Activated CD4-positive, alpha-beta T cell treated with anti-CD3 and anti-CD28 coated beads for 36 hours (primary cell): ENCODE measurements at regions of chr11 and their contacts with region 1.

Region 1: GRCh38 chr11:63768237-63769043 is at the start of gene ZFTA:
- DNase-seq: peak; percentile 77
- ATAC-seq: peak; percentile 58
- H3K4me3 Mint-ChIP-seq: peak within 1 kb of the TSS; percentile 96
- H3K27ac Mint-ChIP-seq: peak within 1 kb of the TSS; percentile 78
- H3K4me1 Mint-ChIP-seq: peaks cover 6% of the 10 kb centered on the region
- H3K27me3 Mint-ChIP-seq: peaks cover 20% of the 10 kb centered on the region
- total RNA-seq, gene ZFTA: 1.5 to 1.7 TPM

Region 2: GRCh38 chr11:63813035-63813562 is 44.7 kb after region 1 on chr11 and contains the start of gene SPINDOC:
- CTCF ChIA-PET with region 1: no interaction called
- POLR2A ChIA-PET with region 1: no interaction called
- intact Hi-C with region 1: loop called (anchors 1 to 5 kb)
- DNase-seq: peak; percentile 80
- ATAC-seq: peak; percentile 91
- H3K4me3 Mint-ChIP-seq: peak within 1 kb of the TSS; percentile 77
- H3K27ac Mint-ChIP-seq: no peak within 1 kb of the TSS
- H3K4me1 Mint-ChIP-seq: peaks cover 21% of the 10 kb centered on the region
- H3K27me3 Mint-ChIP-seq: no peaks in the 10 kb centered on the region
- total RNA-seq, gene SPINDOC: 25.7 to 26.2 TPM

Region 3: GRCh38 chr11:63945477-63946163 is 177.2 kb after region 1 on chr11:
- CTCF ChIA-PET with region 1: interaction called, 6 read pairs
- POLR2A ChIA-PET with region 1: no interaction called
- intact Hi-C with region 1: loop called in 1 of 2 experiments (anchors 5 kb)
- DNase-seq: peak; percentile 69
- ATAC-seq: peak; percentile 80
- H3K4me3 Mint-ChIP-seq: no peak overlapping the region
- H3K27ac Mint-ChIP-seq: no peak overlapping the region
- H3K4me1 Mint-ChIP-seq: peaks cover under 1% of the 10 kb centered on the region
- H3K27me3 Mint-ChIP-seq: no peaks in the 10 kb centered on the region

Region 4: DNA sequence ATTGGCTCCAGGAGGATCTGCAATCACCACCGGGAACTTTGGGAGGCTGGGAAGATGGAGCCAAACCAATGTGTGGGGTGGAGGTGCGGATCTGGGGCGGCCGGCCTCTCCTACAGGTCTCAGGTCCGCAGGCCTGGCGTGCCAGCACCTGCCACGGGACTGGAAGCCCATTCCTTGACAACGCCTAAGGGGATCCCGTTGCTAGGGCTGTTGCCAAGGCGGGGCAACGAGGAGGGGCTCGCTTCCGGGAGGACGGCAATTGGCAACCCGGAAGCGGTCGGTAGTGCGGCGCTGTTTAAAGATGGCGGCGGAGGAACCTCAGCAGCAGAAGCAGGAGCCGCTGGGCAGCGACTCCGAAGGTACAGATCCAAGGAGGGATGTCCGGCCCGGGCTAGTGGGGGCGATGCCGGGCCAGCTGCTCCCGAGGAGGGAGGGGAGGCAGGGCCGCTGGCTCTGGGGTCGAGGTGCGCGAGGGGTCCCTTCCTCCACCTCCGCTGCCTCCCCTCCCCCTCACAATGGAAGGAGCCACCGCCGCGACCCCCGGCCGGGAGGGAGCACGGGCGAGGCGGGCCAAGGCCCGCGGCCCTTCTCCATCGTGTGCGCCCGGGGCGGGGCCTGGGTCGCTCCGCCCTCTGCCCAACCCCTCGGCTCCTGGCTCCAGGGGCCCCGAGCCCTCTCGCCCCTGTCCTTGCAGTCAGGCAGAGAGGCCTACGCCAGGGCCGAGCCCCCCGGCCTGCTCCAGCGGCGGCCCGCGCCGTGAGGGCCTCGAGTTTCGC is 217.9 kb after region 1 on chr11 and contains the start of gene OTUB1:
- CTCF ChIA-PET with region 1: no interaction called
- POLR2A ChIA-PET with region 1: interaction called, 3 read pairs
- intact Hi-C with region 1: loop called in 1 of 2 experiments (anchors 1 kb)
- DNase-seq: peak; percentile 94
- ATAC-seq: peak; percentile 92
- H3K4me3 Mint-ChIP-seq: peak within 1 kb of the TSS; percentile 93
- H3K27ac Mint-ChIP-seq: peak within 1 kb of the TSS; percentile 89
- H3K4me1 Mint-ChIP-seq: peaks cover 23% of the 10 kb centered on the region
- H3K27me3 Mint-ChIP-seq: no peaks in the 10 kb centered on the region
- total RNA-seq, gene OTUB1: 77.4 to 86.1 TPM

Region 5: DNA sequence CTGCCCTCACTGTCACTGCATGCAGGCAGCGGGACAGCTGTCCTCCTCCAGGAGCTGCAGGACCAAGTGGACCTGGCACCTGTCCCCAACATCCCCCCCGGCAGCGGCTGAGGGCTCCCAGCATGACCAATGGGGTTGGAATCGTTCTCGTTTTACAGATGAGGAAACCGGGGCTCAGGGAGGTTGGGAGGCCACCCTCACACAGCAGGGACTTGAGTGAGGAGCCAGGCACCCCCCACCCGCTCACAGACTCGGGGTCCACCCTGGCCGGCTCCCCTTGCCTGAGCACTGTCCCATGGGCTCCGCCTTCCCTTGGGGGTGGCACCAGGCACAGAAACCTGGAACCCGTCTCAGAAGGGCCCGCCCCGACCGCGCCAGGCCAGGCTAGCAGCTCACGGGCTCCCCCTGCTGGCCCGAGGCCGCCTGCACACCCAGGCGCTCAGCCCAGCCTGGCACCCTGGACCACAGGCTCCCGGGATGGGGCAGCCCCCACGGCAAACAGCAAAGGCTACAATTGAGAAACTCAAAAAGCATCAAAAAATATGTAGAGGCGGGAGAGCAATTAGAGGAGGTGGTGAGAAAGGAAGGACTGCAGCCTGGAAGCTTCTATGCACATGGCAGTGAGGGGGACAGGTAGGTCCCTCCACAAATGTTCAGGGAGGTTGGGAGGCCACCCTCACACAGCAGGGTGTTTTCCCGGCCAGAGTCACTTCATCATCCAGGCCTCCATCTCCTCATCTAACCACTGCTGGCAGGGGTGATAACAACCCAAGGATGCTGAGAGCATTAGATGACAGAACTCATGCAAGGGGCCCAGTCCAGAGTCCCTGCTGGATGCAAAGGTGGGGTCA is 384.6 kb after region 1 on chr11:
- CTCF ChIA-PET with region 1: no interaction called
- POLR2A ChIA-PET with region 1: no interaction called
- intact Hi-C with region 1: loop called in 1 of 2 experiments (anchors 2 kb)
- DNase-seq: peak; percentile 85
- ATAC-seq: peak; percentile 97
- H3K4me3 Mint-ChIP-seq: no peak overlapping the region
- H3K27ac Mint-ChIP-seq: no peak overlapping the region
- H3K4me1 Mint-ChIP-seq: peaks cover 3% of the 10 kb centered on the region
- H3K27me3 Mint-ChIP-seq: no peaks in the 10 kb centered on the region

Region 6: DNA sequence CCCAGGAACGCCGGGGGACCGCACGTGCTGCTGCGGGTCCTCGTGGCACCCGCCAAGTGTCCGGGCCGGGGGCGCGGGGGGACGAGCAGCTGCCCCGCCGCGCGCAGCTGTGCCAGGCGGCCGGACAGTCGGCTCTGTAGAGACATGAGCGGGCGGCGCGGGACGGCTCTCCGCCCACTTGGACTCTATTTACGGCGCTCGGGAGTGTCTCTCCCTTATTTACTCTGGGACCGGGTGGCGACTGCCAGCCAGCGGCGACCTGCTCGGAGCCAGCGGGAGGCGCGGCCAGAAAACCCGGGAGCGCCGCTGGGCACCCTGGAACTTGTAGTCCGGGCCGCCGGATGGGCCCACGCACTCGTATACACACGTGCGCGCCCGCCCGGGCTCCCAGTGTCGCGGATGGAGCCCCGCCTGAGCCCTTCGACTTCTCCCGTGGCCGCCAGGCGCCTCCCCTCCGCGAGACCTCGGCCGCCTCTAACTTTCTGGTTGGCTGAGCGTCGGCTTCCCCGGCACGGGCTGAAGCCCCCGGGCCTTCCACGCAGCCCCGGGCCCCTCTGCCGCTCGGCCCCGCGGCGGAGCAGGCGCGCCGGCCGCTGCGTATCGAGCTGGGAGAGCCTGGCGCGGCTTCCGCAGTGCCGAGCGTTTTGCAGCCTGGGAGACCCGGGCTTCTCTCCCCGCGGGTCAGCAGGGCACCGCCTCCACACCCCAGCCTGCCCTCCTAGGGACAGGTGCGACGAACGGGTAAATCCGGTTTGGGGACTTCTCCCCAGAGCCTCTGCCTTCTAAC is 397.6 kb after region 1 on chr11 and contains the start of gene MACROD1:
- CTCF ChIA-PET with region 1: no interaction called
- POLR2A ChIA-PET with region 1: no interaction called
- intact Hi-C with region 1: loop called in 1 of 2 experiments (anchors 5 kb)
- DNase-seq: peak; percentile 92
- ATAC-seq: peak; percentile 94
- H3K4me3 Mint-ChIP-seq: peak within 1 kb of the TSS; percentile 92
- H3K27ac Mint-ChIP-seq: peak within 1 kb of the TSS; percentile 83
- H3K4me1 Mint-ChIP-seq: peaks cover 9% of the 10 kb centered on the region
- H3K27me3 Mint-ChIP-seq: no peaks in the 10 kb centered on the region
- total RNA-seq, gene MACROD1: 26.4 to 28.6 TPM

Region 7: DNA sequence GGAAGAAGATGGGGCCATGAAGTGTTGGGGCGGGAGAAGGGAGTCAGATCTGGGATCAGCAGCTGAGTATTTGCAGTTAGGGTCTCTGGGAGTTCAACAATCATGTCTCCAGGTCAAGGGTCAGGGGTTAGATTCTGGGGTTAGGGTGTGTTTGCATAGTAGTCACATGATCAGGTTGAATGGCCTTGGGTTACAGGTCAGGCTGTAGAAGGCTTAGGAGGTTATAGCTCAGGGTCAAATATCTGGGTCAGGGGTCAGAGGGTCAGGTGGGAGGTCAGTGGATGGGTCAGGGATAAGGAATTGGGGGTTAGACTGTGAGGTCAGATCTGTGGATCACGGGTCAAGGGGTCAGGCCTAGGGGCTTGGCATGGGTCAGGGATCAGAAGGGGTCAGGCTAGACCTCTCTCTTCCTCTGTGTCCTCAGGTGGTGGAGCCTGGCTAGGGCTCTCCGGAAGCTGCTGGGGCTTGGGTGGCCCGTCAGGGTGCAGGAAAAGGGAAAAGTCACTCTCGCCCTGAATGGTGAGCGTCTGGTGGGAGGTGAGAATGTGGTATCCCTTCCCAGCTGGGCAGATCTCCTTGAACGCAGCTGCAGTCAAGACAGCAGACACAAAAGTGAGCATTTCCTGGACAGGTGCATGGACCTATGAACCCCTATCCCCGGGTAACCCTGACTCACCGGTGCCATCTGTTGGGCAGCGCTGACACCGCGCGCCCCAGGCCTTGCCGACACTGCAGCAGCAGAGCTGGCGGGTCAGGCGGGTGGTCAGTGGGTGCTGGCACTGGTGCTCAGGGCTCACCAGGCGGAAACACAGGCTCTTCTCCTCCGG is 1783.3 kb after region 1 on chr11:
- CTCF ChIA-PET with region 1: no interaction called
- POLR2A ChIA-PET with region 1: no interaction called
- intact Hi-C with region 1: loop called in 1 of 2 experiments (anchors 5 kb)
- DNase-seq: peak; percentile 79
- ATAC-seq: peak; percentile 51
- H3K4me3 Mint-ChIP-seq: no peak overlapping the region
- H3K27ac Mint-ChIP-seq: peak overlapping the region; percentile 59
- H3K4me1 Mint-ChIP-seq: peaks cover 70% of the 10 kb centered on the region
- H3K27me3 Mint-ChIP-seq: no peaks in the 10 kb centered on the region